Heart right ventricle (tissue), 16 donors: ENCODE measurements at regions of chr7 and their contacts with region 1.

Region 1: GRCh38 chr7:36048141-36048901 is 104.7 kb upstream of the EEPD1 start:
- DNase-seq: peak in 1 of 2 donors; percentile 44
- ATAC-seq: peak; percentile 49 to 90 (median 80)
- H3K4me3 ChIP-seq: no peak overlapping the region
- H3K27ac ChIP-seq: peak overlapping the region; percentile 25 to 75 (median 48)
- H3K4me1 ChIP-seq: peaks cover 18 to 67% (median 54%) of the 10 kb centered on the region in 9 donors
- H3K27me3 ChIP-seq: no peaks in the 10 kb centered on the region
- CTCF ChIP-seq: no peak

Region 2: DNA sequence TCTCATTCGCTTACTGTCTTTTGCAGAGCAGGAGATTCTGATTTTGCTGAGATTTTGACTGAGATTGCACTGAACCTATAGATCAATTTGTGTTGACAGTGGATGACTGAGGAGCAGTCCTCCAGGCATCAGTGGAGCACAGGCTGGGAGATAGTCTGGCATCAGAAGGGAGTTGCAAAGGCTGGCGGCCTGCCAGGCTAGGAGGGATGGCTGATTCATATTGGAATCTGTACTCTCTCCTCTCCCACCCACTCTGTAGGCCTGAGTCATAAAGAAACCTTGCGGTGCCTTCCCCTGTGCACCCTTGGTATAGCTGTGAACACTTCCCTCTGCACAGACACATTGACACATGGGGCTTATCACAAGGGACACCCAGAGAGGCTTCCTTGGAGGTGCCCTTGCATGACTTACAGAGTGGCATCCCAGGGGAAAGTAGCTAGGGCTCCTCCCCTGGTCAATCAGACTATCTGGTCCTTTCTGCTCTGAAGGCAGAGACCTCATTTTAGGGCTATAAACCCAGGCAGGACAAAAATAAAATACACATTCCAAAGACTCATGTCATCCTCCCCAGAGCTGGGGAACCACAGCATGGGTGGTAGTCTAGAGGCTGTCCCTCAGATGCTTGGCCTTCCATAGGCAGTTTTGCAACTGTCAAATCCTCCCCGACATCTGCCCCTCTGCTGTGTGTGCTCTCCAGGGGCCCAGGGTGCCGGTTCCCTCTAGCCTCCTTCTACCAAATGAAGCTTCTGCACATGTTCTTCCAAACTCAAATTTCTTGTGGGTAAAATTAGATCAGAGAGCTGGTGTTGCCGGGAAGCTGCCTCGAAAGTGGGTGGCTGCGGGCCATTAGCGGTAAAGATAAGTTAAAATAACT is 67.4 kb after region 1 on chr7:
- intact Hi-C with region 1: loop called in 1 of 10 experiments (anchors 2 kb)
- DNase-seq: peak; percentile 36 to 68
- ATAC-seq: peak; percentile 27 to 85 (median 62)
- H3K4me3 ChIP-seq: no peak overlapping the region
- H3K27ac ChIP-seq: peak overlapping the region in 6 of 10 donors; percentile 3 to 61 (median 44)
- H3K4me1 ChIP-seq: peaks cover 6 to 57% (median 34%) of the 10 kb centered on the region in 9 donors
- H3K27me3 ChIP-seq: no peaks in the 10 kb centered on the region
- CTCF ChIP-seq: no peak

Region 3: GRCh38 chr7:36264123-36264801 is 215.9 kb after region 1 on chr7:
- intact Hi-C with region 1: no loop called
- DNase-seq: no peak
- ATAC-seq: peak in 4 of 8 donors; percentile 50 to 71 (median 52)
- H3K4me3 ChIP-seq: no peak overlapping the region
- H3K27ac ChIP-seq: peak overlapping the region in 5 of 10 donors; percentile 37 to 88 (median 51)
- H3K4me1 ChIP-seq: peaks cover 0 to 64% (median 47%) of the 10 kb centered on the region in 9 donors
- H3K27me3 ChIP-seq: no peaks in the 10 kb centered on the region
- CTCF ChIP-seq: no peak